ENCODE measurements at regions of chr1 and their contacts with region 1.

Region 1: DNA sequence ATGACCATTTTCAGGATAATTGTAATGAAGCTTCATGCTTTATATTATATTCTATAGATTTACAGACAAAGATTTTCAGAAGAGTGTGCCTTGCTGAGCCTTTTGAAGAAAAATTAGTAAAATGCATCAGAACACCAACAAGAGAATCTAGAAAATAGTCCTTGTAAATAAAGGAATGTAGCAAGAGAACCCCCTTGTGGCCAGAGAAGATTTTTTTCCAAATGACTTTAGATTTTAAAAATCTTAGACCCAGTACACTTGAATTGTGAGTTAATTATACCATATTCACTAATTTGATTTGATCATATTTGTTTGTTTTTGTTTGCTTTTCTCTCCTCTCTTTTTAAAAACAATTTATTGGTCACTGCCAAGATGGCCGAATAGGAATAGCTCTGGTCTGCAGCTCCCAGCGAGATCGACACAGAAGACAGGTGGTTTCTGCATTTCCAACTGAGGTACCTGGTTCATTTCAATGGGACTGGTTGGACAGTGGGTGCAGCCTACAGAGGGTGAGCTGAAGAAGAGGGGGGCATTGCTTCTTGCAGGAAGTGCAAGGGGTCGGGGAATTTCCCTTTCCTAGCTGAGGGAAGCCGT is 12.8 kb upstream of the IFI44L start:
- DNase-seq: no peak
- H3K4me3 ChIP-seq: no peak overlapping the region
- CTCF ChIP-seq: no peak
- POLR2A ChIP-seq: no peak

Region 2: GRCh38 chr1:78145105-78145580 is 462.3 kb before region 1 on chr1:
- intact Hi-C with region 1: loop called (anchors 10 kb)
- DNase-seq: peak; percentile 62 to 89
- H3K4me3 ChIP-seq: no peak overlapping the region
- CTCF ChIP-seq: no peak
- POLR2A ChIP-seq: no peak